ENCODE measurements at regions of chr19 and their contacts with region 1.

Region 1: GRCh38 chr19:36214386-36215275 is at the starts of genes ZNF146 and ZNF565:
- DNase-seq: peak; percentile 98
- H3K4me3 Mint-ChIP-seq: no peak within 1 kb of the TSS
- H3K27ac Mint-ChIP-seq: no peak within 1 kb of the TSS
- H3K4me1 Mint-ChIP-seq: peaks cover 27% of the 10 kb centered on the region
- H3K27me3 Mint-ChIP-seq: no peaks in the 10 kb centered on the region
- total RNA-seq, gene ZNF146: 78.2 to 79.2 TPM
- total RNA-seq, gene ZNF565: 2.0 to 2.2 TPM

Region 2: DNA sequence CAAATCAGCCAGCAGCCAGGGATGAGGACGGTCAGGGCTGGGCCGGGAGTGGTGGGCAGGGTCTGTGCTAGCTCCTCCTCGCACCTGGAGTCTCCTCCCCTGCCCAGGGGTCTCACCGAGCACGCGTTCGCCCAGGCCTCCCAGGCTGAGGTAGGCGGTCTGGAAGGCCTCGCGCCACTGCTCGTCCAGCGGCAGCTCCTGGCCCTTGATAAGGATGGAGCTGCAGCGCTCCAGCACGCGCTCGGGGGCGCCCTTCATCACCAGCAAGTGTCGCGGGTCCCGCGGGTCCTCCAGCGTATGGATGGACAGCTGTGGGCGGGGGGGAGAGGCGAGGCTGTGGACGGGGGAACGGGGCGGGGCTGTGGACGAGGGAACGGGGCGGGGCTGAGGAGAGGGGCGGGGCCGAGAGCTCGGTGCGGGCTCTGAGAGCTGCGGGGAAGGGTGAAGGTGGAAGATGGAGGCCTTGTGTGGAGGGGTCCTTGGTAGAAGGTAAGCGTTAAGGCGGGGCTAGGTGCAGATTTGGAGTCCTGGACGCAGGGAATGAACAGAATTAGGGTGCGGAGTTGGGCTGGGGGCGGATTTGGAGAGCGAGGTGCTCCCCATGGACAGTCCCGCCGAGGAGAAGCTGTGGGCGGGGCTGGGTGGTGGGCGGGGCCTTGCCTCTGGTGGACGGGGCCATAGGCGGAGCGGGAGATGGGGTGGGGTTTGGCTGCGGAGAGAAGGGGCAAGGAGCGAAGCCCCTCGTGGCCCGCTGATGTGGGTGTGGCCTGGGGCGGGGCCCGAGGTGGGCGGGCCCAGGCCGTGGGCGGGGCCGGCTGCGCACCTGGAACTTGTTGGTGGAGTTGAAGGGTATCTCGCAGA is 656.9 kb before region 1 on chr19:
- CTCF ChIA-PET with region 1: no interaction called
- intact Hi-C with region 1: no loop called
- DNase-seq: peak; percentile 56
- H3K4me3 Mint-ChIP-seq: peak overlapping the region; percentile 64
- H3K27ac Mint-ChIP-seq: no peak overlapping the region
- H3K4me1 Mint-ChIP-seq: peaks cover 12% of the 10 kb centered on the region
- H3K27me3 Mint-ChIP-seq: peaks cover 29% of the 10 kb centered on the region

Region 3: DNA sequence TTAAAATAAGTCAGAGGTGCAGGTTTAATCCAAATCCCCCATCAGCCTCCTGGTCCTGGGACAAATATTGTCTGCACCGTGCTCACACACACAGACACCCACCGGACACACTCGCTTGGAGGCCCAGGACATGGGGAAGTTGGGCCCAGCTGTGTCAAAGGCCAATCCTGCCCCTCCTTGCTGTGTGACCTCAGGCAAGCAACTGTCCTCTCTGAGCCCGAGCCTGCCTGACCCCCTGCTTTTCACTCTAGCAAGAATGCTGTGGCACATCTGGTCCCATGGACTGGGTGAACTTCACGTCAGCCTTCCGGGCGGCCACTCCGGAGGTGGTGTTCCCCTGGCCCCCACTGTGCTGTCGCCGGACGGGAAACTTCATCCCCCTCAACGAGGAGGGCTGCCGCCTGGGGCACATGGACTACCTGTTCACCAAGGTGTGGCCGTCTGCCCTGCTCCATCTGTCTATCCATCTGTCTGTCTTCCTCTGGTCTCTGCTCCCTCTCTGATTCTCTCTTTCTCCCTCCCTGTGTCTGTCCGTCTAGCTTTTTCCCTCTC is 539.0 kb before region 1 on chr19:
- CTCF ChIA-PET with region 1: no interaction called
- intact Hi-C with region 1: no loop called
- DNase-seq: no peak
- H3K4me3 Mint-ChIP-seq: no peak overlapping the region
- H3K27ac Mint-ChIP-seq: no peak overlapping the region
- H3K4me1 Mint-ChIP-seq: peaks cover 5% of the 10 kb centered on the region
- H3K27me3 Mint-ChIP-seq: peaks cover 19% of the 10 kb centered on the region

Region 4: GRCh38 chr19:36054119-36054732 is 160.4 kb before region 1 on chr19 and contains the start of gene THAP8:
- CTCF ChIA-PET with region 1: no interaction called
- intact Hi-C with region 1: loop called (anchors 1 kb)
- DNase-seq: peak; percentile 100
- H3K4me3 Mint-ChIP-seq: peak within 1 kb of the TSS; percentile 94
- H3K27ac Mint-ChIP-seq: peak within 1 kb of the TSS; percentile 98
- H3K4me1 Mint-ChIP-seq: peaks cover 18% of the 10 kb centered on the region
- H3K27me3 Mint-ChIP-seq: no peaks in the 10 kb centered on the region
- total RNA-seq, gene THAP8: 1.1 to 1.2 TPM

Region 5: DNA sequence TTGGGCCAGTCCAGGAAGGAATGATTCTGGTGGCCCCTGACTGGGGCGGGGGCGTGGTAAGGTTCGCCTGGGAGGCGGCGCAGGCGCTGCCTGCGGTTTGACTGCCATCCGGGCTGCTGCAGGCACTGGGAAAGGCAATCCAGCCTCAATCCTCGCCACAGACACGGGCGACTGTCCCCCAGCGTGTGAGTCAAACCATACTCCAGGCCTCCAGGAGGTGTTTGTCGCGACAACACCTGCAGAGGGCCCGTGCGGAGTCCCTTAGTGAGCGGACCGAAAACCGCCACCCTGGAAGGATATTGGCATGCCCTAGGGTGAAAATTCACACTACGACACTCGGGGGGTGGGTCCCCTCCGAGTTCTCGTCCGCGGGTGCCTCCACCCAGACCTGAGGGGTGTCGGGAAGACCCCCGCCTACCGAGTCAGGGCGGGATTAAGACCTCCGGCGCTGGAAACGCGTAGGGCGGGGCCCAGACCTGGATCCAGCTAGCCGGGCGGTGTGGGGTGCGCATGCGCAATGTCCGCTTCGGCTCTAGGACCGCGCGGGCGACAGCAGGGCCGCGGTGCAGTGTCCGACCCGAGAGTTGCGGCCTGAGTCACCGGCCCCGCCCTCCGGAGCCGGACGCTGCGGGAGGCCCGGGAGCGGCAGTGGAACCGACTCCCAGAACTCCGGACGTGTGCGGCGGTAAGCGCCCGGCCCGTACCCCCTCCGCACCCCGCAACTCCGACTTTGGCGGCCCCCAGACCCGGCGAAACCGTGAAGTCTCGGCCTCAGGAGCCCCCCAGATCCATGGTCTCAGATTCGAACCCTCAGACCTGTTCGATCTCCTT is 74.9 kb before region 1 on chr19 and contains the start of gene CAPNS1:
- CTCF ChIA-PET with region 1: no interaction called
- intact Hi-C with region 1: loop called (anchors 1 kb)
- DNase-seq: peak; percentile 92
- H3K4me3 Mint-ChIP-seq: peak within 1 kb of the TSS; percentile 90
- H3K27ac Mint-ChIP-seq: peak within 1 kb of the TSS; percentile 94
- H3K4me1 Mint-ChIP-seq: peaks cover 17% of the 10 kb centered on the region
- H3K27me3 Mint-ChIP-seq: no peaks in the 10 kb centered on the region
- total RNA-seq, gene CAPNS1: 301 to 307 TPM

Region 6: DNA sequence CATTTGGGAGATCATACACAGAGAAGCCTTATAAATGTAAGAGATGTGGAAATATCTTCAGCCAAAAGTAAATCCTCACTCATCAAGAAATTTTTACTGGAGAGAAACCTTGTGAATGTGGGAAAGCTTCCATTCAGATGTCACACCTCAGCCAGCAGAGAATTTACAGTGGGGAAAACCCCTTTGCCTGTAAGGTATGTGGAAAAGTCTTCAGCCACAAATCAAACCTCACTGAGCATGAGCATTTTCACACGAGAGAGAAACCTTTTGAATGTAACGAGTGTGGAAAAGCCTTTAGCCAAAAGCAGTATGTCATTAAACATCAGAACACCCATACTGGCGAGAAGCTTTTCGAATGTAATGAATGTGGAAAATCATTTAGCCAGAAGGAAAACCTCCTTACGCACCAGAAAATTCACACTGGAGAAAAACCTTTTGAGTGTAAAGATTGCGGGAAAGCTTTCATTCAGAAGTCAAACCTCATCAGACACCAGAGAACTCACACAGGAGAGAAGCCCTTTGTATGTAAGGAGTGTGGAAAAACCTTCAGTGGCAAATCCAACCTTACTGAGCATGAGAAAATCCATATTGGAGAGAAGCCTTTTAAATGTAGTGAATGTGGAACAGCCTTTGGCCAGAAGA is 21.8 kb after region 1 on chr19:
- CTCF ChIA-PET with region 1: no interaction called
- intact Hi-C with region 1: no loop called
- DNase-seq: no peak
- H3K4me3 Mint-ChIP-seq: no peak overlapping the region
- H3K27ac Mint-ChIP-seq: no peak overlapping the region
- H3K4me1 Mint-ChIP-seq: no peaks in the 10 kb centered on the region
- H3K27me3 Mint-ChIP-seq: no peaks in the 10 kb centered on the region

Region 7: DNA sequence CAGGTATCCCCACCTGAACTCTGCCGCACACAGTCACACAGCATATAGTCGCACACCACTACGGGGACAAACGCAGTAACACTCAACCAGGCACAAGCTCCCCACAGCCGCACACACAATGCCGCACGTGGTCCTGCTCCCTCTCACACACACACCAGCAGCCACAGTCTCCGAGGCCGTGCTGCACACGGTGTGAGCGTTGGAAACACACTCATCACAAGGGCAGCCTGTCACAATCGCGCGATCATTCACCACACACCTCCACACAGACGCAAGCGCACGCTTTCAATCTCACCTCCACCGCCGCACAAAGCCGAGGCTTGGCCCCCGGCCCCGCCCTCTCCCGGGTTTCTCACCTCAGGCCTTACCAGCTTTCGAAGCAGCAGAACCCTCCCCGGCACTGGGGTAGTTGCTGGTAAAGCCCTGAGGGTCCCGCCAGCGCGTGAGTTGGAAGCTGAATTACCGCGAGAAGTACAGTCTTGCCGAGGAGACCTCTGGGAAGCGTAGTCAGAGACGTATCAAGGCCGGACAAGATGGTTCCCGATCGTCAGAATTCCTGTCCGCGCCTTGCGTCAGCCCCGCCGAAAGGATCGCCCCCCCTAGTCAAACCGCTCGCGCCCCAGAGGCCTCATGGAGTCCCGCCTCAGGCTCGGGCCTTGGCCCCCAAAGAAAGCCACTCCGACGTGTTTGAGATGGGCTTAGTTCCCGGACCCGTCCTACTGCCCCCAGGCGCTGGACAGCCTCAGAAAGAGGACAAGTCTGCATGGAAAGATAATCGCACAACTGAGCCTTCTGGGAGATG is 274.7 kb after region 1 on chr19 and contains the start of gene ZNF566:
- CTCF ChIA-PET with region 1: no interaction called
- intact Hi-C with region 1: loop called (anchors 1 kb)
- DNase-seq: peak; percentile 95
- H3K4me3 Mint-ChIP-seq: peak within 1 kb of the TSS; percentile 96
- H3K27ac Mint-ChIP-seq: peak within 1 kb of the TSS; percentile 98
- H3K4me1 Mint-ChIP-seq: peaks cover 19% of the 10 kb centered on the region
- H3K27me3 Mint-ChIP-seq: no peaks in the 10 kb centered on the region
- total RNA-seq, gene ZNF566: 4.4 to 5.3 TPM

Region 8: DNA sequence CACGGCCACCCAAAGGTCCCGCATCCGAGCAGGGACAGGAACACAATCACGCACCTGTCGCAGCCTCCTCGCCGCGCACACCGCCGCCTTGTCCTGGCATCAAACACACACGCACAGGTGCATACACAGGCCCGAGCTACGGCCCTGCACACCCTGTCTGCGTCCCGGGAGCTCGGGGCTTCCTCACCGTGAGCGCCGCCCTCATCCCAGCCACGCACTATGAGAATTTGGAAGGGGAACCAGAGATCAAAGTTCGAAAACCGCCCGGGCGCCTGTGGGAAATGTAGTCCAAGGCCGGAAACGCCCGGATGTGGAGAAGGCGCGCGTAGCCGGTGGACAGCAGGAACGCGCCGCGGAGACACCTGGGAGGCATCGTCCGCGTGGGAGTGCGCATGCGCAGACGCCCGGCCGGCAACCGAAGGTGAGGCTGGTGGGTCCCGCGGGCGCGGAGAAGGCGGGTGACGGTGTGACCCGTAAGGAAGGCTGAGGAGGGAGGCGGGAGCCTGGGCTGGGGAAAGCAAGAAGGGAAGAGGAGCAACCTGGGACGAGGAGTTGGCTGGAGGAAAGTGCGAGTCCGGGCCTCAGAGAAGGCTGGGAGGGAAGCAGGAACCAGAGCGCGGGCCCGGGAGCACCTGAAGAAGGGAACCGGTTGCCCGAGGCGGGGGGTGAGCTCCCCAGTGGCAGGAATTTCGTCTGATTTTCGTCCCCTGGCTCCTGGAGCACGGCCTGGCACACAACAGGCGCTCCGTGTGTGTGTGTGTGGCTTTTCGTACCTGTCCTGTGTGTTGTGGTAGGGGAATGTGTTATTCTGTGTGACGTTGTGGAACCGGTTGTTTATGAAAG is 472.8 kb after region 1 on chr19 and contains the start of gene ZNF567:
- CTCF ChIA-PET with region 1: no interaction called
- intact Hi-C with region 1: loop called (anchors 1 kb)
- DNase-seq: peak; percentile 98
- H3K4me3 Mint-ChIP-seq: peak within 1 kb of the TSS; percentile 88
- H3K27ac Mint-ChIP-seq: peak within 1 kb of the TSS; percentile 90
- H3K4me1 Mint-ChIP-seq: peaks cover 26% of the 10 kb centered on the region
- H3K27me3 Mint-ChIP-seq: no peaks in the 10 kb centered on the region
- total RNA-seq, gene ZNF567: 6.0 to 6.8 TPM

Region 9: DNA sequence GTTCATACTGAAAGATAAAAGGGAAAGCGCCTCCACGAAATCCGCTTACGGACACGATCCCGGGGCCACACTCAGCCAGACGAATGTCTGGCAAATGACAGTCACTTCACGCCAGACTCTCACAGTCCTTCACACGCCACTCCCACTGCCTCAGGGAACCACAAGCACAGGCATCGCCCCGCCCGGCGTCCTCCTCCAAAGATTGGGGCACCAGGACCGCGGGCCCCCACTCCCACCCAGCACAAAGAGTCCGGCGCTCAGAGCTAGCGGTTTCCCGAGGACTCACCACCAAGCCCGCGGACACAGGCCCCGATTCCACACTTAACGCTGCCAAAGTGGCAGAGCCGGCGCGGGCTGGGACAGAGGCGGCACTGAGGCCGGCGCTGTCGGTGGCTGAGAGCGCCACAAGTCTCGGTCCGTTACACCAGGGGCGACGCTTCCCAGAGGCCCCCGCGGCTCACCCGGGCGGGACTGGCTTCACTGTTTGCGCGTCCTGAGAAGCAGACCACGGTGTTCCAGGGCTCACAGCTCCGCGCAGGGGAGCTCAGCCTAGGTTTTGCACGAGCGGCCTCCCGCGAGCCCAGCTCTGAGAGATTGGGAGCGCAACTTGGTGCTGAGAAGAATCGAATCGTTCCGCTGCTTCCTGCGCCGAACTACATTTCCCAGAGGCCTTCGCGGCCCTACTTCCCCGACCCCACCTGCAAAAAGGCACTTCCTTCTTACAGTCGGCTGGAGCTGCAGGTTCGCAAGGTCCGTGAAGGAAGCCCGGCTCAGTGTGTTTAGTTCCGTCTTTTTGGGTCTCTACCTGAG is 1252.4 kb after region 1 on chr19 and contains the start of gene ZNF569:
- CTCF ChIA-PET with region 1: no interaction called
- intact Hi-C with region 1: loop called (anchors 10 kb)
- DNase-seq: peak; percentile 93
- H3K4me3 Mint-ChIP-seq: peak within 1 kb of the TSS; percentile 96
- H3K27ac Mint-ChIP-seq: peak within 1 kb of the TSS; percentile 92
- H3K4me1 Mint-ChIP-seq: peaks cover 28% of the 10 kb centered on the region
- H3K27me3 Mint-ChIP-seq: no peaks in the 10 kb centered on the region
- total RNA-seq, gene ZNF569: 8.6 to 10.6 TPM

Measured in activated naive CD4-positive, alpha-beta T cell treated with anti-CD3 and anti-CD28 coated beads for 36 hours (primary cell).